ENCODE measurements at regions of chr9 and their contacts with region 1.

Region 1: DNA sequence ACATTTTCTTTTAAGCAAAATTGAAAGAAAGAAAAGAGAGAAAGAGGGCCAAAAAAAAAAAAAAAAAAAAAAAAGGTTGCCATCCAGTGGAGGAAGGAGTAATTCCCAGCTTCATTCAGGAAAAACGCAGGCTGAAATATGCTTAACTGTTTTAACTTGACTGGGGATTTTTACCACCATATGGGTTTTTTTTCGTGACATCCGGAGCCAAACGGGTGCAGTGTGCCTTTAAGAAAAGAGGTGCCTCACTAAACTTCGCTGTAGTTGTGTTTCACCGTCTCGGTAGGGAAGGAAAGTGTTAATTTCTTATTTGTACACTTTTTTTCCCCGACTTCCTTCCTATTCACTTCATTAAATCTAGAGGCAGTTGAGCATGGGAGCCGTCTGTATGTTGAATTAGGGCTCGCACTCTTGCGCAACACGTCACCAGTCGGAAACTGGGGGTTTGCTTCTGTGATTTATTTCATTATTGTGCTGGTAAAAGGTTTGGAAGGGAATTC is 143.0 kb downstream of the SMARCA2 start:
- DNase-seq: peak; percentile 32 to 37
- ATAC-seq: peak; percentile 31 to 75 (median 51)
- H3K4me3 ChIP-seq: peak overlapping the region; percentile 26 to 67 (median 55)
- H3K27ac ChIP-seq: peak overlapping the region in 9 of 10 donors; percentile 65 to 88 (median 81)
- H3K4me1 ChIP-seq: peaks cover 0 to 59% (median 36%) of the 10 kb centered on the region in 9 donors
- H3K27me3 ChIP-seq: no peaks in the 10 kb centered on the region
- CTCF ChIP-seq: peak in 1 of 9 donors; percentile 17

Region 2: DNA sequence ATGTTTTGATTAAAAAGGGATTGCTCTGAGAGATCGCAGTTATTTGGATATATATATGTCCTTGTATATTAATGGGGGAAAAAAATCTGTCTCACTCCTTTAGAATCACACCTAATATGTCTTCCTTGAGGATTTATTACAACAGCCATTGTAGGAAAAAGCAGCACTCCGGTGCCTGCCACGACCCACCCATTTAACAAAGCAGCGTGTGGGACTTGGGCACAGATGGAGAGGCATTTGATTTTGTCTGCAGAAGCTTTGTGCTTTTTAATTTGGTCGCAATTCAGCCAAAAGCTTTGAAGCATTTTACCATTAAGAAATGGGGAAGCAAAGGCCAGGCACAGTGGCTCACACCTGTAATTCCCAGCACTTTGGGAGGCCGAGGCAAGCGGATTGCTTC is 16.1 kb after region 1 on chr9:
- intact Hi-C with region 1: loop called in 1 of 10 experiments (anchors 1 kb)
- DNase-seq: no peak
- ATAC-seq: no peak
- H3K4me3 ChIP-seq: no peak overlapping the region
- H3K27ac ChIP-seq: no peak overlapping the region
- H3K4me1 ChIP-seq: peaks cover 0 to 18% (median 4%) of the 10 kb centered on the region in 9 donors
- H3K27me3 ChIP-seq: no peaks in the 10 kb centered on the region
- CTCF ChIP-seq: no peak

Region 3: GRCh38 chr9:2199999-2200796 is 42.0 kb after region 1 on chr9:
- intact Hi-C with region 1: no loop called
- DNase-seq: no peak
- ATAC-seq: no peak
- H3K4me3 ChIP-seq: no peak overlapping the region
- H3K27ac ChIP-seq: no peak overlapping the region
- H3K4me1 ChIP-seq: no peaks in the 10 kb centered on the region
- H3K27me3 ChIP-seq: no peaks in the 10 kb centered on the region
- CTCF ChIP-seq: no peak

Region 4: GRCh38 chr9:2241836-2242741 is 83.9 kb after region 1 on chr9:
- intact Hi-C with region 1: loop called in 1 of 10 experiments (anchors 5 kb)
- DNase-seq: peak; percentile 79 to 82
- ATAC-seq: peak; percentile 89 to 97 (median 96)
- H3K4me3 ChIP-seq: peak overlapping the region; percentile 7 to 68 (median 54)
- H3K27ac ChIP-seq: peak overlapping the region in 9 of 10 donors; percentile 54 to 80 (median 67)
- H3K4me1 ChIP-seq: peaks cover 0 to 23% (median 14%) of the 10 kb centered on the region in 9 donors
- H3K27me3 ChIP-seq: no peaks in the 10 kb centered on the region
- CTCF ChIP-seq: peak in 2 of 9 donors; percentile 3 to 24